CD8-positive, alpha-beta T cell (primary cell): ENCODE measurements at regions of chr4 and their contacts with region 1.

Region 1: GRCh38 chr4:36224972-36225903 is 19.1 kb downstream of the ARAP2 start:
- DNase-seq: no peak
- ATAC-seq: no peak
- H3K4me3 ChIP-seq: no peak overlapping the region
- H3K4me3 Mint-ChIP-seq: peak overlapping the region; percentile 16
- H3K27ac ChIP-seq: peak overlapping the region in 1 of 2 experiments; percentile 8
- H3K27ac Mint-ChIP-seq: peak overlapping the region; percentile 33
- H3K4me1 ChIP-seq: peaks cover 51% of the 10 kb centered on the region
- H3K4me1 Mint-ChIP-seq: peaks cover 86% of the 10 kb centered on the region
- H3K27me3 ChIP-seq: no peaks in the 10 kb centered on the region
- H3K27me3 Mint-ChIP-seq: no peaks in the 10 kb centered on the region
- CTCF ChIP-seq: no peak

Region 2: DNA sequence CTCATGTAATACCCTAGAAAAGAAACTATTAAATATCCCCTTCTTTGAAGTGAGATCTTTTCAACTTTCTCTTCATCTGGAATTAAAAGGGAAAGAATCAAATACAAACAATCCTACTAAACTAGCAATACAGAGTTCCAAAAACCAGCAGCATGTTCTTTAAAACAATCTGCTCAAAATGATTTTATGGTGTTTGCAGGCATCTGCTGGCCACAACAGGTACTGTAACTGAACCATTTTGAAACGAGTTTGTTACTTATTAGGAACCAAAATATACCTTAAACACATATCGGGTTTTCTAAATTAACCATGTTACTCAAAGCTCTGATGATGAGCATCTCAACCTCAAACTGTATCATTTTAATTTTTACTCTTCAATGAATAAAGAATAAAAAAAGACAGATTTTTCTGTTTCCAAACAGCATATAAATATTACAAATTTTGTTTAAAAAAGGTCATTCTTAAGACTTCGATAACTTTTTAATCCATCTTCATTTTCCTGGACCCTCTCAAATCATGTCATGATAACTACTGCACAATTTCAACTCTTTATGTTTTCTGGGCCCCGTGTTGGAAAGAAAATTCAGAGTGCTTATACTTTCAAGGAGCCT is 37.4 kb before region 1 on chr4:
- CTCF ChIA-PET with region 1: no interaction called
- POLR2A ChIA-PET with region 1: no interaction called
- intact Hi-C with region 1: loop called in 1 of 2 experiments (anchors 5 kb)
- DNase-seq: peak in 2 of 9 experiments; percentile 47 to 59
- ATAC-seq: no peak
- H3K4me3 ChIP-seq: no peak overlapping the region
- H3K4me3 Mint-ChIP-seq: no peak overlapping the region
- H3K27ac ChIP-seq: peak overlapping the region in 1 of 2 experiments; percentile 45
- H3K27ac Mint-ChIP-seq: no peak overlapping the region
- H3K4me1 ChIP-seq: peaks cover 20% of the 10 kb centered on the region
- H3K4me1 Mint-ChIP-seq: peaks cover 44% of the 10 kb centered on the region
- H3K27me3 ChIP-seq: no peaks in the 10 kb centered on the region
- H3K27me3 Mint-ChIP-seq: no peaks in the 10 kb centered on the region
- CTCF ChIP-seq: peak; percentile 72

Region 3: DNA sequence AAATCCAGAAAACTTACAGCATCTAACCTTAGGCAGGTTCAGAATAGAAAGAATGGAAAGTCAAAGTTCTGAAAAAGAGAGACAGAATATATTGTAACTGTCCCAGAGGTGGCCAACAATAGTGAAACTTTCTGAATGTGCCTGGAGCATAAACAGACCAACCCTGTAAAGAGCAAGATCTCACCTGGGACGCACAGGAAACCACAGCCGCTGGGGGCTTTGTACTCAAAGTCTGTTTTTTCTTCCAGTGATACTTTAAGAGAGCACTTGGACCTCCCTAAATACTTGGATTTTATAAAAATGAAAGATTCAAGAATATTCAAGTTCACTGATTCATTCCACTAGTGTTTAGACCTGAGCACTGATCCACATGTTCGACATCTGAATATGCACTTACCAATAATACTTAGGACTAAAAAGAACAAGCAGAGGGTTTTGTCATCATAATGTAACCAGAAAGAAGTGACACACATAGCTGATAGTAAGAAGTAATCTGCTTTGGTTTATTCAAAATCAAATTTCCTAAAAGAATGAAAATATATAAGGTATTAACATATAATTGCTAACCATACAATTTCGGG is 16.3 kb before region 1 on chr4:
- CTCF ChIA-PET with region 1: no interaction called
- POLR2A ChIA-PET with region 1: no interaction called
- intact Hi-C with region 1: loop called in 1 of 2 experiments (anchors 1 kb)
- DNase-seq: peak in 8 of 9 experiments; percentile 16 to 79 (median 51)
- ATAC-seq: peak; percentile 82
- H3K4me3 ChIP-seq: peak overlapping the region in 1 of 2 experiments; percentile 6
- H3K4me3 Mint-ChIP-seq: peak overlapping the region; percentile 54
- H3K27ac ChIP-seq: peak overlapping the region in 1 of 2 experiments; percentile 51
- H3K27ac Mint-ChIP-seq: peak overlapping the region; percentile 86
- H3K4me1 ChIP-seq: peaks cover 17% of the 10 kb centered on the region
- H3K4me1 Mint-ChIP-seq: peaks cover 68% of the 10 kb centered on the region
- H3K27me3 ChIP-seq: no peaks in the 10 kb centered on the region
- H3K27me3 Mint-ChIP-seq: no peaks in the 10 kb centered on the region
- CTCF ChIP-seq: no peak

Region 4: DNA sequence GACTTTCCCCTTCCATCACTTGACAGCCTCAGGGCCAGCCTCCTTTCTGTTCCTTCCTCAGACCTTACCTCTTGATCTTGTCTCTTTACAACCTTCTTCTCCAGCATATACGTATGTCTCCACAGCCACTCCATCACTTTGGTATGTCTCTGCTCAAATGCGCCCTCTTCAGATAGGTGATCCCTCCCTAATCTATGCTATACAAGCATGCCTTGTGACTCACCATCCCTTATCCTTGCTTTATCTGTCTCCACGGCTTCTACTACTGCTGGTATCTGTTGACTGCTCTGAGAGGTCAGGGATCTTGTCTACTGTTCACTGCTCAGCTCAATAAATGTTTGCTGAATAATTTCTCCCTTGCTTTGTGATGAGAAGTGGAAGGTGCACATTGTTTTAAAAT is 10.1 kb after region 1 on chr4:
- CTCF ChIA-PET with region 1: interaction called, 5 read pairs
- POLR2A ChIA-PET with region 1: no interaction called
- intact Hi-C with region 1: loop called in 1 of 2 experiments (anchors 1 kb)
- DNase-seq: peak in 2 of 9 experiments; percentile 17 to 33
- ATAC-seq: peak; percentile 43
- H3K4me3 ChIP-seq: no peak overlapping the region
- H3K4me3 Mint-ChIP-seq: no peak overlapping the region
- H3K27ac ChIP-seq: no peak overlapping the region
- H3K27ac Mint-ChIP-seq: peak overlapping the region; percentile 62
- H3K4me1 ChIP-seq: peaks cover 23% of the 10 kb centered on the region
- H3K4me1 Mint-ChIP-seq: peaks cover 88% of the 10 kb centered on the region
- H3K27me3 ChIP-seq: no peaks in the 10 kb centered on the region
- H3K27me3 Mint-ChIP-seq: no peaks in the 10 kb centered on the region
- CTCF ChIP-seq: no peak

Region 5: DNA sequence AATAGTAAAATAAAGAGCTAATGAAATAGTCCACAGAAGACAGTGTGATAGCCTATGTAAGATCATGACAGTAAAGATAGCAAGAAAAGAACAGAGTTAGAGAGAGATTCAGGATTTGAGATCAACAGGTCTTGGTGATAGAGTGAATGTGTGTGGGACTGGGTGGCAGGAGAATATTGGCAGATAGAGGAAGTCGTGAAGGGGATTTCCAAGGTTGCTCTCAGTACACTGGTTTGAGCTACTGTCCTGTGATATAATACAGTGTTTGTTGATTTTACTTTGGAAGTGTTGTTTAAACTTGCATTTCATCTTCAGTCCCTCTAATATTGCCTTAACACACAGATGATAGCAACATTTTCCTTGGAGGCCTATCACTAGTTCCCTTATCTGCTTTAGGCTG is 100.3 kb after region 1 on chr4:
- CTCF ChIA-PET with region 1: no interaction called
- POLR2A ChIA-PET with region 1: interaction called, 3 read pairs
- intact Hi-C with region 1: loop called in 1 of 2 experiments (anchors 5 kb)
- DNase-seq: peak in 2 of 9 experiments; percentile 60 to 75
- ATAC-seq: no peak
- H3K4me3 ChIP-seq: no peak overlapping the region
- H3K4me3 Mint-ChIP-seq: no peak overlapping the region
- H3K27ac ChIP-seq: peak overlapping the region in 1 of 2 experiments; percentile 11
- H3K27ac Mint-ChIP-seq: peak overlapping the region; percentile 55
- H3K4me1 ChIP-seq: peaks cover 27% of the 10 kb centered on the region
- H3K4me1 Mint-ChIP-seq: peaks cover 46% of the 10 kb centered on the region
- H3K27me3 ChIP-seq: no peaks in the 10 kb centered on the region
- H3K27me3 Mint-ChIP-seq: no peaks in the 10 kb centered on the region
- CTCF ChIP-seq: no peak

Region 6: GRCh38 chr4:36930562-36931111 is 705.4 kb after region 1 on chr4:
- CTCF ChIA-PET with region 1: no interaction called
- POLR2A ChIA-PET with region 1: no interaction called
- intact Hi-C with region 1: no loop called
- DNase-seq: no peak
- ATAC-seq: no peak
- H3K4me3 ChIP-seq: no peak overlapping the region
- H3K4me3 Mint-ChIP-seq: no peak overlapping the region
- H3K27ac ChIP-seq: no peak overlapping the region
- H3K27ac Mint-ChIP-seq: no peak overlapping the region
- H3K4me1 ChIP-seq: no peaks in the 10 kb centered on the region
- H3K4me1 Mint-ChIP-seq: no peaks in the 10 kb centered on the region
- H3K27me3 ChIP-seq: no peaks in the 10 kb centered on the region
- H3K27me3 Mint-ChIP-seq: no peaks in the 10 kb centered on the region
- CTCF ChIP-seq: no peak